WTC11 (cell line): ENCODE measurements at regions of chr1 and their contacts with region 1.

Region 1: DNA sequence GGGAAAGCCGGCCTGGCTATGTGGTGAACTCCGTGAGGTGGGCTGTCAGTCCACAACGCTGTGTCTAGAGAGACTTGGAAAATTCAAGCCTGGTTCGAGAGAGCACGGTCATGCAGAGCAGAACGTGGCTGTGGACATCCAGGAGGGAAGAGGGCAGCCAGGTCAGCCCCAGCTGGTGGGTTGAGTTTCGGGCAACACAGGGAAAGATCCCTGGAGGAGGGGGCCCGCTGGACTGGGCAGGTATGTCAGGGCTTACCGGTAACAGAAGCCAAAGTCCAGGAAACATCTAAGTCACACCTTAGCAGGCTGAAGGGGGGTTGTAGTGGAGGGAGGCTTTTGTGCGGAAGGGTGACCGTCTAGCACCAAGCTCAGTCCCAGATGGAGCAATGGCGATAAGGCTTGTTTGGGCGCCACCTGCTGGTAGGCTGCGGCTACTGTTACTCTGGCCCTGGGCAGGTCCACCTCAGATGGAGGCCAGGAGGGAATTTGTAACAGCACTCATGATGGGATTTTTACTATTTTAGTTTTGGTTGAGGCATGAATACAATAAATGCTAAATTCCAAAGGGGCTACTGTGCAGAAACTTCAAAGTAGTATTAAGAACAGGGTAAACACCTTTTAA is 143.3 kb upstream of the ZNF644 start:
- DNase-seq: peak; percentile 95
- ATAC-seq: peak; percentile 96
- H3K4me3 Mint-ChIP-seq: no peak overlapping the region
- H3K27ac Mint-ChIP-seq: no peak overlapping the region
- H3K4me1 Mint-ChIP-seq: peaks cover 29% of the 10 kb centered on the region
- H3K27me3 Mint-ChIP-seq: peaks cover 6% of the 10 kb centered on the region
- CTCF ChIP-seq: peak; percentile 97

Region 2: GRCh38 chr1:90721210-90722194 is 443.6 kb before region 1 on chr1:
- CTCF ChIA-PET with region 1: interaction called, 220 read pairs
- POLR2A ChIA-PET with region 1: no interaction called
- DNase-seq: peak; percentile 83
- ATAC-seq: no peak
- H3K4me3 Mint-ChIP-seq: peak overlapping the region; percentile 38; the same call in 1 of the 2 replicates
- H3K27ac Mint-ChIP-seq: no peak overlapping the region
- H3K4me1 Mint-ChIP-seq: peaks cover 63% of the 10 kb centered on the region
- H3K27me3 Mint-ChIP-seq: peaks cover 99% of the 10 kb centered on the region
- CTCF ChIP-seq: peak; percentile 81

Region 3: GRCh38 chr1:91011726-91012125 is 153.4 kb before region 1 on chr1:
- CTCF ChIA-PET with region 1: interaction called, 43 read pairs
- POLR2A ChIA-PET with region 1: interaction called, 3 read pairs
- DNase-seq: no peak
- ATAC-seq: no peak
- H3K4me3 Mint-ChIP-seq: no peak overlapping the region
- H3K27ac Mint-ChIP-seq: no peak overlapping the region
- H3K4me1 Mint-ChIP-seq: peaks cover 80% of the 10 kb centered on the region
- H3K27me3 Mint-ChIP-seq: no peaks in the 10 kb centered on the region
- CTCF ChIP-seq: no peak

Region 4: GRCh38 chr1:91070298-91070697 is 94.8 kb before region 1 on chr1:
- CTCF ChIA-PET with region 1: interaction called, 14 read pairs
- POLR2A ChIA-PET with region 1: no interaction called
- DNase-seq: no peak
- ATAC-seq: no peak
- H3K4me3 Mint-ChIP-seq: no peak overlapping the region
- H3K27ac Mint-ChIP-seq: peak overlapping the region; percentile 50
- H3K4me1 Mint-ChIP-seq: peaks cover 27% of the 10 kb centered on the region
- H3K27me3 Mint-ChIP-seq: no peaks in the 10 kb centered on the region
- CTCF ChIP-seq: no peak

Region 5: DNA sequence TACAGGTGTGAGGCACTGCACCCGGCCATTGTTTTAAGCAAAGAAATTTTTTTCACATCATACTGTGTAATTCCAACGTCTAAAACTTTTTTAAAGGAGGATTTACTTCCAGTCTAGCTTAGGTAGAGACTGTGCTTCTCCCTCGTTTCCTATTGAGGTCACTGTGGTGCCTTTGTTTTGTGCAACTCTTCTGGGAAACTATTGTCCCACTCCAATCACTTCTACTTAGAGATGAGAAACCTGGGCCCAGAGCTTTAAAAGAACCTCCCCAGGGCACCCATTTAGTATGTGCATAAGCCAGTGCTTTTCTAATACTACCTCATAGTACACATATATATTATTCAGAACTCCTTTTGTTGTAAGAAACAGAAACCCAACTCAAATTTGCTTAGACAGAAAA is 23.3 kb before region 1 on chr1:
- CTCF ChIA-PET with region 1: interaction called, 63 read pairs
- POLR2A ChIA-PET with region 1: no interaction called
- DNase-seq: no peak
- ATAC-seq: peak; percentile 83
- H3K4me3 Mint-ChIP-seq: no peak overlapping the region
- H3K27ac Mint-ChIP-seq: no peak overlapping the region
- H3K4me1 Mint-ChIP-seq: peaks cover 41% of the 10 kb centered on the region
- H3K27me3 Mint-ChIP-seq: no peaks in the 10 kb centered on the region
- CTCF ChIP-seq: no peak

Region 6: GRCh38 chr1:91201176-91201575 is 36.0 kb after region 1 on chr1:
- CTCF ChIA-PET with region 1: interaction called, 25 read pairs
- POLR2A ChIA-PET with region 1: no interaction called
- DNase-seq: no peak
- ATAC-seq: no peak
- H3K4me3 Mint-ChIP-seq: no peak overlapping the region
- H3K27ac Mint-ChIP-seq: no peak overlapping the region
- H3K4me1 Mint-ChIP-seq: peaks cover 12% of the 10 kb centered on the region
- H3K27me3 Mint-ChIP-seq: no peaks in the 10 kb centered on the region
- CTCF ChIP-seq: no peak

Region 7: GRCh38 chr1:91282695-91283420 is 117.7 kb after region 1 on chr1:
- CTCF ChIA-PET with region 1: interaction called, 186 read pairs
- POLR2A ChIA-PET with region 1: interaction called, 3 read pairs
- DNase-seq: peak; percentile 62
- ATAC-seq: peak; percentile 65
- H3K4me3 Mint-ChIP-seq: no peak overlapping the region
- H3K27ac Mint-ChIP-seq: 0 out of 2 replicates have a peak overlapping the region, but pooled peaks have one; percentile 12
- H3K4me1 Mint-ChIP-seq: peaks cover 12% of the 10 kb centered on the region
- H3K27me3 Mint-ChIP-seq: no peaks in the 10 kb centered on the region
- CTCF ChIP-seq: peak; percentile 58